ENCODE measurements at regions of chr17 and their contacts with region 1.

Region 1: DNA sequence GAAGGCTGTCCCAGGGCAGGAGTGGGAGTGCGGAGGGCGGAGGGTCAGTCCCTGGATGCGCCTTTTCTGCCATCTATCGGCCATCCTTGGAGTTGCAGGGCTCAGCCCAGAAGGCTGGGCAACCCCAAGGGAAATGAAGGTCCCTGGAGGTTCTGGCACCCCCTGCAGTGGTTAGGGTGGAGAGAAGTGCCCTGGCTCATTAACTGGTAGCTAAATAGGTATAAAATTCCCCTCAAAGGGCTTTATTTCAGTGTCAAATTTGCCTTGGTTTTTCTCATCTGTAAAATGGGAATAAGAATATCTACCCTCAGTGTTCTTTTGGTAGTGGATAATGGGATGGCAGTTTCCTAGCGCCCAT is 22.4 kb downstream of the C17orf75 start:
- DNase-seq: peak; percentile 84
- ATAC-seq: peak; percentile 93 to 94
- H3K4me3 ChIP-seq: peak overlapping the region; percentile 38
- H3K27ac ChIP-seq: no peak overlapping the region
- H3K4me1 ChIP-seq: peaks cover 5% of the 10 kb centered on the region
- H3K27me3 ChIP-seq: no peaks in the 10 kb centered on the region
- CTCF ChIP-seq: peak; percentile 94

Region 2: DNA sequence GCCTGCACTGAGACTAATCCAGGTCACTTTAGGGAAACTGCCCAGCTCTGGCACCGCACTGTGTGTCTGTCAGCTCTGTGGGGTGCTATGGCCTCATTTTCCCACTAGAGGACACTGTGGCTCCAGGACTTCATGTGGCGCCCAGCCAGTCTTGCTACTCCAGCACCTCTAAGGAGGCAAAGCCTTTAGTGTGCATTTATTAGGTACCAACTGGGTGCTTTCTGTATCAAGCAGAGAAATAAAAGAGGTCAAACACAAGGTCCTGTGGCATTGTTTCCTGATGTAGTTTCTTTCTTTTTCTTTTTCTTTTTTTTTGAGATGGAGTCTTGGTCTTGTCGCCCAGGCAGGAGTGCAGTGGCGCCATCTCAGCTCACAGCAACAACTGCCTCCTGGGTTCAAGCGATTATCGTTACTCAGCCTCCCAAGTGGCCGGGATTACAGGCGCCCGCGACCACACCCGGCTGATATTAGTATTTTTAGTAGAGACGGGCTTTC is 66.4 kb before region 1 on chr17:
- intact Hi-C with region 1: loop called (anchors 10 kb)
- DNase-seq: peak; percentile 82
- ATAC-seq: peak; percentile 93 to 96
- H3K4me3 ChIP-seq: no peak overlapping the region
- H3K27ac ChIP-seq: no peak overlapping the region
- H3K4me1 ChIP-seq: no peaks in the 10 kb centered on the region
- H3K27me3 ChIP-seq: no peaks in the 10 kb centered on the region
- CTCF ChIP-seq: peak; percentile 95

Region 3: DNA sequence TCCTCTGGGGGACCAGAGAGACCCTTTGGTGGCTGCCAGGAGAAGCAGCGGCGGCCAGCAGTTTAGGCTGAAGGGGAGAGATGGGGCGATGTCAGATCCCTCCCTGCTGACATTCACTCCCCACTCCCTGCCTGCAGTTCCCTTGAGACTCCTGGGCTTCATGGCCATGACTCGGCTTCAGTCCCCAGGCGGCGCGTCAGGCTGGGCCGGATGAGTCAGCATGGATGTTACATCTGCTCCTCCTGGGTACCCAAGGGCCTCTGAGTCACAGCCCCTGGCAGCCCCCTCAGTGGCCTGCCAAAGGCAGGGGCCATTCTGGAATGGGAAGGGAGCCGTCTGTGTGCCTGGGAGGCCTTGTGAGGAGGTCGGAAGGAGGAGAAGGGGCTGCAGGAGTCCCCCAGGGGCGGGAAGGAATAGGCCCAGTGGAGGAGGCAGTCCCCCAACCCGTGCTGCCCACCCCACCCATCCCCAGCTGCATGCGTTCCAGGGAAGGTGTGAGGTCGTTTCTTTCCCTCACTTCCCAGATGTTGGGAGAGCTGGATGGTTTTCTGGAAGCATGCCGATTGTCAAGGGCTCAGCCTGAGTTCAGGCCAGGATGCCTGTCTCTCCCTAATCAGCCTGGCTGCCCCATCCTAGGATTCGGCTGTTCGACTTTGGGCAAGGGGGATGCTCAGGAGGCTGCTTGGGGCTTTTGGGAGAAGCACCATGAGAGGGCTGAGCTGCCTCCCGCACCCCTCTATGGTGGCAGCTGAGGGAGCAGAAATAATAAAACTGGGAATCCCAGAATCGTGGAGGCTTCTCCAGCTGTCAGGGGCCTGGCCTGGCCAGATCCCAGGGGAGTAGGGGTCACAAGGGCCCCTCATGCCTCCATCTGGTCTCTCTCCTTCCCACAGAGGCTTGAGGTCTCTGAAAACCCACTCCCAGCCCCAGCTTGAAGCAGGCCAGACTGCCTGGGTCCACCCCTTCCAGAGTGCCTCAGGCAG is 44.2 kb before region 1 on chr17:
- intact Hi-C with region 1: no loop called
- DNase-seq: peak; percentile 41
- ATAC-seq: peak in 1 of 2 donors; percentile 45
- H3K4me3 ChIP-seq: no peak overlapping the region
- H3K27ac ChIP-seq: no peak overlapping the region
- H3K4me1 ChIP-seq: no peaks in the 10 kb centered on the region
- H3K27me3 ChIP-seq: peaks cover 33% of the 10 kb centered on the region
- CTCF ChIP-seq: no peak